Activated CD4-positive, alpha-beta T cell treated with anti-CD3 and anti-CD28 coated beads for 36 hours (primary cell): ENCODE measurements at regions of chr17 and their contacts with region 1.

Region 1: GRCh38 chr17:55717898-55718735 is 4.5 kb downstream of the TMEM100 start:
- DNase-seq: peak; percentile 82
- ATAC-seq: no peak
- H3K4me3 Mint-ChIP-seq: no peak overlapping the region
- H3K27ac Mint-ChIP-seq: no peak overlapping the region
- H3K4me1 Mint-ChIP-seq: no peaks in the 10 kb centered on the region
- H3K27me3 Mint-ChIP-seq: peaks cover 24% of the 10 kb centered on the region

Region 2: GRCh38 chr17:55635253-55635914 is 82.7 kb before region 1 on chr17:
- CTCF ChIA-PET with region 1: interaction called, 12 read pairs
- POLR2A ChIA-PET with region 1: no interaction called
- intact Hi-C with region 1: no loop called
- DNase-seq: no peak
- ATAC-seq: no peak
- H3K4me3 Mint-ChIP-seq: no peak overlapping the region
- H3K27ac Mint-ChIP-seq: no peak overlapping the region
- H3K4me1 Mint-ChIP-seq: no peaks in the 10 kb centered on the region
- H3K27me3 Mint-ChIP-seq: peaks cover 15% of the 10 kb centered on the region

Region 3: GRCh38 chr17:55704401-55704800 is 13.7 kb before region 1 on chr17:
- CTCF ChIA-PET with region 1: interaction called, 14 read pairs
- POLR2A ChIA-PET with region 1: no interaction called
- intact Hi-C with region 1: no loop called
- DNase-seq: no peak
- ATAC-seq: no peak
- H3K4me3 Mint-ChIP-seq: no peak overlapping the region
- H3K27ac Mint-ChIP-seq: no peak overlapping the region
- H3K4me1 Mint-ChIP-seq: no peaks in the 10 kb centered on the region
- H3K27me3 Mint-ChIP-seq: peaks cover 40% of the 10 kb centered on the region

Region 4: DNA sequence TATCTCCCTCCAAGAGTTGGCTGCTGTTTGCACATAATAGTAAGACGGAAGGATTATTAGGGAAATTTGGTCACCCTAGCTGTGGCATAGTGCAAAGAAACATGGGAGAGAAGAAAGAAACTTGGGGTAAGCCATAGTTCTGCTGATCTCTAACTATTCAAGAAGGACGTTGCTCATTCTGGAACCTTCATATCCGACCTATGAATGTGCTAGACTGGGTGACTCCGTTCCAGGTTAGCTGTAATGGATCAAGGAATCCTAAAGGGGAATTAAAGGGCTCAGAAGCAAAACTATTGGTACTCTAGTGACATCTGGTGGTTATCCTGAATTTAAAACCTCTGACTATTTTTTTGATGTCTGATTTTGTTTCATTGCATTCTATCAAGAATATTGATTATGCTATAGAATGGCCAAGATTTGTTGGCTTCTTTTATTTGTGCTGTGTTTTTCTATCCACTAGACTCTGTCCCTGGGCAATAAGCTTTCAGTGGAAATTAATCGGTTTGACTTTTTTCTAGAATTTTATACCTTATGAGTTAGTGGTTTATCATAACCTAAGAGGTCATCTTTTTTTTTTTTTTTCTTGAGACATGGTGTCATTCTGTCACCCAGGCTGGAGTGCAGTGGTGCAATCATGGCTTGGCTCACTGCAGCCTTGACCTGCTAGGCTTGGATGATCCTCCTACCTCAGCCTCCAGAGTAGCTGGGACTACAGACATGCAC is 52.2 kb after region 1 on chr17:
- CTCF ChIA-PET with region 1: interaction called, 7 read pairs
- POLR2A ChIA-PET with region 1: no interaction called
- intact Hi-C with region 1: loop called in 1 of 2 experiments (anchors 2 kb)
- DNase-seq: no peak
- ATAC-seq: no peak
- H3K4me3 Mint-ChIP-seq: no peak overlapping the region
- H3K27ac Mint-ChIP-seq: no peak overlapping the region
- H3K4me1 Mint-ChIP-seq: no peaks in the 10 kb centered on the region
- H3K27me3 Mint-ChIP-seq: no peaks in the 10 kb centered on the region